ENCODE measurements at regions of chr11 and their contacts with region 1.

Region 1: DNA sequence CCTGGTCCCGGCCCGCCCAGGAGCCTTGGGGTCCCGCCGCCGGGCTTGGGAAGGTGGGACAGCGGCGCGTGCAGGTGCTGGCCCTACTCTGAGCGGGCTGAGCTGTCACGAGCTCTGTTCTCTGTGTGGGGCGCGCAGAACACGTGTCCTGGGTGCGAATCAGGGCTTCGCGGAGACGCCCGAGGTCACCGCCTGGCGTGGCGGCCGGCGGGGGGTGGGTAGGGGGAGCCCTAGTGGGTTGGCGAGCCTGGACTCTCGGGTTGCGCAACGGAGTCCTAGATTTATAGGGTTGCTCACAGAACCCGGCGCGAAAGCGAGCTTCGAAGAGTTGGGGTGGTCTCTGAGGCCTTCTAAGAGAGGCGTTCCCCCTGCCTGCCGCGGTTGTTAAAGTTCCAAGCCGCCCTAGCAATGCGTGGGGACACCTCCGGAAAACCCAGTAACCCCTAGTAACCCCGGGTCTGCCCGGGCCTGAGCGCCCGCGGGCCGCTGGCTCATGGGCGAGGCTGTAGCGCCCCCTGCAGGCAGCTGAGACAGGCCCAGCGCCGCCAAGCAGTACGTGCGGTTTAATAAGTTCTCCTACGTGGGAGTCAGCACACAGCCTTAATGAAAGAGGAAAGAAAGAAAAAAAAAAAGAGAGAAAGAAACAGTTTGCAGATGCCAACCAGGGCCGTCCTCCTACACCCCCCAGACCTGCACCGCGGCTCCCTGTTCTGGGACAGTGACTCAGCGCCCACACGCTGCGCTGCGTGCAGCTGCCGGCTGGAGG is 2.8 kb downstream of the ADM start:
- DNase-seq: peak; percentile 71
- ATAC-seq: peak; percentile 62
- H3K4me3 ChIP-seq: peak overlapping the region; percentile 79 to 88 (median 82)
- H3K27ac ChIP-seq: peak overlapping the region; percentile 69
- H3K4me1 ChIP-seq: peaks cover 45% of the 10 kb centered on the region
- H3K27me3 ChIP-seq: no peaks in the 10 kb centered on the region; a peak in 1 of 5 replicates
- CTCF ChIP-seq: peak; percentile 92
- EP300 ChIP-seq: peak in 1 of 2 experiments; percentile 35; a peak in 2 of 4 replicates
- POLR2A ChIP-seq: peak in 1 of 2 experiments; percentile 6; a peak in 1 of 4 replicates
- RAD21 ChIP-seq: peak; percentile 94

Region 2: GRCh38 chr11:9757809-9758636 is 549.6 kb before region 1 on chr11:
- CTCF ChIA-PET with region 1: interaction called, 3 read pairs
- POLR2A ChIA-PET with region 1: interaction called, 23 read pairs
- in situ Hi-C with region 1: no loop called
- intact Hi-C with region 1: loop called (anchors 5 kb)
- DNase-seq: peak; percentile 63
- ATAC-seq: peak; percentile 84
- H3K4me3 ChIP-seq: peak overlapping the region; percentile 63 to 87 (median 77)
- H3K27ac ChIP-seq: peak overlapping the region; percentile 90
- H3K4me1 ChIP-seq: peaks cover 57% of the 10 kb centered on the region
- H3K27me3 ChIP-seq: no peaks in the 10 kb centered on the region; a peak in 1 of 5 replicates
- CTCF ChIP-seq: peak; percentile 71; the same call in 1 of the 2 replicates
- EP300 ChIP-seq: no peak
- POLR2A ChIP-seq: peak; percentile 19 to 89; a peak in 3 of 4 replicates
- RAD21 ChIP-seq: peak; percentile 98

Region 3: DNA sequence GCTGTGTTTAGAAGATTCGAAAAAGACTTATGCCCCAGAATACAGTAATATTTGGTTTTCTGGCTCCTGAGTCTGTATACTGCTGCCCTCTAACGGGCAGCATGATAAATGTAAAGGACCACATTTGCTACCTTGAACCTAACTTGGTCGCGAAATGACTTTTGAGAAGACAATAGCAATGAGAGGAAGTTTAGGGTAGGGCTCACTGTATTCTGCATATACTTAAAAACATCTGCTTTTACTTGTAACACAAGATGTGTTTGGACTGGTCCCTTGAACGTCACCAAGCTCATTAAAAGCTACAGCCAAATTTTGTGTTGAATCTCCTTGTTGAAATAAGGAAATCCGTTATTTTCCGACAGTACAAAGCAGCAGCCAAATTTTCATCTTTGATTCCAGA is 334.6 kb before region 1 on chr11:
- CTCF ChIA-PET with region 1: no interaction called
- POLR2A ChIA-PET with region 1: no interaction called
- in situ Hi-C with region 1: loop called (anchors 10 kb)
- intact Hi-C with region 1: loop called (anchors 5 kb)
- DNase-seq: peak; percentile 40
- ATAC-seq: peak; percentile 57
- H3K4me3 ChIP-seq: no peak overlapping the region
- H3K27ac ChIP-seq: no peak overlapping the region
- H3K4me1 ChIP-seq: no peaks in the 10 kb centered on the region
- H3K27me3 ChIP-seq: no peaks in the 10 kb centered on the region
- CTCF ChIP-seq: peak; percentile 79
- EP300 ChIP-seq: no peak
- POLR2A ChIP-seq: no peak
- RAD21 ChIP-seq: peak; percentile 77

Region 4: GRCh38 chr11:10044618-10045017 is 263.0 kb before region 1 on chr11:
- CTCF ChIA-PET with region 1: no interaction called
- POLR2A ChIA-PET with region 1: no interaction called
- in situ Hi-C with region 1: no loop called
- intact Hi-C with region 1: no loop called
- DNase-seq: peak; percentile 4
- ATAC-seq: no peak
- H3K4me3 ChIP-seq: no peak overlapping the region
- H3K27ac ChIP-seq: peak overlapping the region; percentile 45
- H3K4me1 ChIP-seq: 0 out of 2 replicates have a peak, but pooled peaks cover under 1% of the 10 kb centered on the region
- H3K27me3 ChIP-seq: no peaks in the 10 kb centered on the region
- CTCF ChIP-seq: no peak
- EP300 ChIP-seq: no peak
- POLR2A ChIP-seq: no peak
- RAD21 ChIP-seq: no peak

Region 5: GRCh38 chr11:10285148-10285802 is 22.4 kb before region 1 on chr11:
- CTCF ChIA-PET with region 1: interaction called, 7 read pairs
- POLR2A ChIA-PET with region 1: interaction called, 221 read pairs
- in situ Hi-C with region 1: no loop called
- intact Hi-C with region 1: loop called (anchors 2 kb)
- DNase-seq: peak; percentile 87
- ATAC-seq: peak; percentile 30
- H3K4me3 ChIP-seq: peak overlapping the region in 1 of 3 experiments; percentile 28; a peak in 2 of 6 replicates
- H3K27ac ChIP-seq: peak overlapping the region; percentile 62
- H3K4me1 ChIP-seq: peaks cover 81% of the 10 kb centered on the region
- H3K27me3 ChIP-seq: no peaks in the 10 kb centered on the region
- CTCF ChIP-seq: no peak
- EP300 ChIP-seq: peak; percentile 51 to 79; a peak in 2 of 4 replicates
- POLR2A ChIP-seq: peak; percentile 58 to 85
- RAD21 ChIP-seq: no peak

Region 6: DNA sequence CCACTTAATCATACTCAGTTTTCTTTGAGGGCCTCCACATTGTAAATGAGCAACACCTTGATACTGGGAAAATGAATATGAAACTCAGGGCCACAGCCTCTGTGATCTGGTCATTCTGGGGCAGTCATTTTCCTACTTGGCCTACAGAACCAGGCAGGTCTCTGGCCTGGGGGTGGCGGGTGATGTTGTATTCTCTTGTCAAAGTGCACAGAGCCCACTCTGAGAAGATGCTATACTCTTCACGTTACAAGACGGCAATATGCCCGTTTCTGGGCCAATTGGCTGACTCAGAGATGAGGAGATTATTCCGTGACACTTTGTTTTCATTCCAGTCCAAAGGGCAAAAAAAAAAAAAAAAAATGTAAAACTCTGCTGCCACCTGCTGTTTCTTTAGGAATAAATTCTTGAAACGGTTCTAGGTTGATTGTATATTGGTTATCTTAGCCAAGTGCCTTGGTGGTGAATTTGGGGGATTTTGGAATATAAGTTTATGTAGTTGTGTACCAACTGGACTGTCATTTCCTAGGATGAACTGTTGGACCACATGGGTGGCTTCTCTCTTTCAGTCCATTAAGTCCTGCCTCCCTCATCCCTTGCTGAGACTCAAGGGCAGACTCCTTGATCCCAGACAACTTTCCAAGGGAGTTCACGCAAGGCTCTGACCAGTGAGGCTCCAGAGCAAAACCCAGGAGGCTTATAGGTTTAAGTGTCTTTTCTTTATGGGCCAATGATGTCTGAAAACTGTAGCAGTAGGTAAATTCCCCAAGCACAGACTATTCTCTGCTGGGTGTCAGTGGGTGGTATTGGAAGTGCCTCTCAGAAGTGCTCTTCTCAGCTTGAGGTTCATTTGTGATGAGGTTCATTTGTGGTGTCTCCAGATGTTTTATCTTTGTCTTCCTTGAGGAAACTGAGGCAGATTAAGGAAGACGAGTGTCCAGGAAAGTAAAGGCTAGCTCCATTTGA is 15.5 kb after region 1 on chr11:
- CTCF ChIA-PET with region 1: interaction called, 16 read pairs
- POLR2A ChIA-PET with region 1: interaction called, 118 read pairs
- in situ Hi-C with region 1: no loop called
- intact Hi-C with region 1: loop called (anchors 2 kb)
- DNase-seq: peak; percentile 84
- ATAC-seq: peak; percentile 34
- H3K4me3 ChIP-seq: peak overlapping the region; percentile 38 to 56 (median 49); a peak in 5 of 6 replicates
- H3K27ac ChIP-seq: peak overlapping the region; percentile 60
- H3K4me1 ChIP-seq: peaks cover 78% of the 10 kb centered on the region
- H3K27me3 ChIP-seq: no peaks in the 10 kb centered on the region
- CTCF ChIP-seq: peak; percentile 68
- EP300 ChIP-seq: peak in 1 of 2 experiments; percentile 57; a peak in 1 of 4 replicates
- POLR2A ChIP-seq: 0 out of 4 replicates have a peak, but pooled peaks of 1 of the 2 experiments have one; percentile 29
- RAD21 ChIP-seq: peak; percentile 58; the same call in 1 of the 2 replicates

Region 7: GRCh38 chr11:10351768-10352641 is 44.4 kb after region 1 on chr11:
- CTCF ChIA-PET with region 1: no interaction called
- POLR2A ChIA-PET with region 1: interaction called, 14 read pairs
- in situ Hi-C with region 1: no loop called
- intact Hi-C with region 1: no loop called
- DNase-seq: peak; percentile 89
- ATAC-seq: peak; percentile 93
- H3K4me3 ChIP-seq: peak overlapping the region; percentile 51 to 62 (median 52); a peak in 5 of 6 replicates
- H3K27ac ChIP-seq: peak overlapping the region; percentile 59
- H3K4me1 ChIP-seq: peaks cover 48% of the 10 kb centered on the region
- H3K27me3 ChIP-seq: no peaks in the 10 kb centered on the region
- CTCF ChIP-seq: no peak
- EP300 ChIP-seq: 0 out of 4 replicates have a peak, but pooled peaks of 1 of the 2 experiments have one; percentile 4
- POLR2A ChIP-seq: no peak
- RAD21 ChIP-seq: no peak